ENCODE measurements at regions of chr11 and their contacts with region 1.

Region 1: GRCh38 chr11:115941481-115941993 is 437.3 kb upstream of the CADM1 start:
- DNase-seq: no peak
- H3K4me3 ChIP-seq: no peak overlapping the region
- H3K27ac ChIP-seq: no peak overlapping the region
- H3K4me1 ChIP-seq: peaks cover 30% of the 10 kb centered on the region
- CTCF ChIP-seq: no peak

Region 2: DNA sequence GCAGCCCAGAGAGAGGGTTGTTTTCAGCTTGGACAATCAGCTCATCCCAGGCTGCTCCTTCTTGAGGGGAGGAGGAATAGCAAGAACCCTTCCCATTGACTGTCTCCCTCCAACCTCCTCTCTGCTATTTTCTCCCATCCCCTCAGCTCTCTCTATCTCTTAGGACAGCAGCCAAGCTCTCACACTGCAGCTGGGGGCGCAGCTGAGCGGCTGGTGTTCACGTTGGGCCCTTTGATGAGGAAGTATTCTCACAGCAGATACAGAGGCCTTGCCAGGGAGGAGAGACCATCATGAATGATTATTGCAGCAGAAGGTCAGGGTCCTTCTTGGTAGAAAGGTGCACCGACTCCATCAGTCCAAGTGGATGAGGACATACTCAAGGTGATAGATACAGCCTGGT is 410.8 kb before region 1 on chr11:
- CTCF ChIA-PET with region 1: no interaction called
- POLR2A ChIA-PET with region 1: no interaction called
- intact Hi-C with region 1: no loop called
- DNase-seq: peak; percentile 42
- H3K4me3 ChIP-seq: no peak overlapping the region
- H3K27ac ChIP-seq: no peak overlapping the region
- H3K4me1 ChIP-seq: no peaks in the 10 kb centered on the region
- CTCF ChIP-seq: peak; percentile 69

Region 3: GRCh38 chr11:115912484-115912945 is 29.0 kb before region 1 on chr11:
- CTCF ChIA-PET with region 1: interaction called, 3 read pairs
- POLR2A ChIA-PET with region 1: interaction called, 11 read pairs
- intact Hi-C with region 1: loop called (anchors 1 kb)
- DNase-seq: peak; percentile 82
- H3K4me3 ChIP-seq: peak overlapping the region; percentile 35
- H3K27ac ChIP-seq: peak overlapping the region; percentile 61
- H3K4me1 ChIP-seq: peaks cover 30% of the 10 kb centered on the region
- CTCF ChIP-seq: peak; percentile 74

Region 4: GRCh38 chr11:115924744-115925567 is 16.6 kb before region 1 on chr11:
- CTCF ChIA-PET with region 1: interaction called, 24 read pairs
- POLR2A ChIA-PET with region 1: interaction called, 94 read pairs
- intact Hi-C with region 1: no loop called
- DNase-seq: no peak
- H3K4me3 ChIP-seq: no peak overlapping the region
- H3K27ac ChIP-seq: no peak overlapping the region
- H3K4me1 ChIP-seq: peaks cover 56% of the 10 kb centered on the region
- CTCF ChIP-seq: no peak

Region 5: GRCh38 chr11:116224154-116224888 is 282.8 kb after region 1 on chr11:
- CTCF ChIA-PET with region 1: no interaction called
- POLR2A ChIA-PET with region 1: no interaction called
- intact Hi-C with region 1: no loop called
- DNase-seq: peak; percentile 45
- H3K4me3 ChIP-seq: no peak overlapping the region
- H3K27ac ChIP-seq: no peak overlapping the region
- H3K4me1 ChIP-seq: no peaks in the 10 kb centered on the region
- CTCF ChIP-seq: peak; percentile 85